ENCODE measurements at regions of chr4 and their contacts with region 1.

Region 1: DNA sequence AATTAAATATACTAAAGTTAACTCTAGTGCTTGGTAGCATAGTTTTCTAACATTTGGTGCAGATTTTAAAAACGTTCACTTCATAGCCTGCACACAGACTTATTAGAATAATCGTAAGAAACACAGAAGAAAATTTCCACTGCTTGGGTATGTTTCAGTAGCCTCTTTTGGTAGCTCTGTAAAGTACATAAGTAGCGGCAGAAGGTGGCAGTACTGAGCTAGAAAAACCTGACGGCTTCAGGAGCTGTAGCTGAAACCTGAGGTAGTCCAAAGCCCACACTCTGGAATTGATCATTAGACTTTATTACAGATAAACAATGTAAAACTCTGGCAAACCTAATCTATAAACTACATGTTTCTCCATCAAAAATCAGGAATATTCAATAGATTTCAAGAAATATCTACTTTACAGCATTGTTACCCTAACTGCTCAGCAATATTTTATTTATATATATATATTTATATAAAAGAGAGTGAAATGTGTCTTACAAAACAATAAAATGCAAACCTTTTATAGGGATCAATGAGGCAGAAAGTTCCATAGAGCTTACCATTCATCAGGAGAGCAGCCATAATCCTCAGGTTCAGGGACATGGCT is 88.2 kb downstream of the ATP8A1 start:
- DNase-seq: peak; percentile 52
- CTCF ChIP-seq: peak; percentile 65

Region 2: GRCh38 chr4:42396752-42397634 is 171.7 kb before region 1 on chr4 and contains the start of gene SHISA3:
- in situ Hi-C with region 1: no loop called
- DNase-seq: peak; percentile 70
- CTCF ChIP-seq: no peak

Region 3: GRCh38 chr4:42736527-42737195 is 168.0 kb after region 1 on chr4:
- in situ Hi-C with region 1: loop called (anchors 25 kb)
- DNase-seq: no peak
- CTCF ChIP-seq: no peak

Region 4: DNA sequence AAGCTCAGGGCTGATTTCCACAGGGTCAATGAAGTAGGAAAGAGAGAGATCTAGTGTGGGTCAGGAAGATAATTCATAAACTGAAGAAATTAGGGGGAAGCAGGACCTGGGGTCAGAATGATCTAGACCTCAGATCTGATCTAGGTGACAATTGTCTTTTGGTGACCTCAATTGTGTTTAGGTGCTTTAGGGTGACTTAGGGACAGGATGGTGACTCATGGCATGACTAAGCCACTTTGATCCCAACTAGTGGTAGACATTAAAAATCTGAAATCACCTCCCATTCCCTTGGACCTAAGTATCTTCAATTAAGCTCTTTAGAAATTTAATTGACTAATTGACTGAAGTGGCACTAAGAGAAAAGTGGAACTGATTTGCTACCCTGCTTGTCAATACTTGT is 287.1 kb after region 1 on chr4:
- in situ Hi-C with region 1: loop called (anchors 10 kb)
- DNase-seq: no peak
- CTCF ChIP-seq: no peak